Activated CD8-positive, alpha-beta T cell treated with anti-CD3 and anti-CD28 coated beads for 36 hours (primary cell): ENCODE measurements at regions of chr6 and their contacts with region 1.

Region 1: DNA sequence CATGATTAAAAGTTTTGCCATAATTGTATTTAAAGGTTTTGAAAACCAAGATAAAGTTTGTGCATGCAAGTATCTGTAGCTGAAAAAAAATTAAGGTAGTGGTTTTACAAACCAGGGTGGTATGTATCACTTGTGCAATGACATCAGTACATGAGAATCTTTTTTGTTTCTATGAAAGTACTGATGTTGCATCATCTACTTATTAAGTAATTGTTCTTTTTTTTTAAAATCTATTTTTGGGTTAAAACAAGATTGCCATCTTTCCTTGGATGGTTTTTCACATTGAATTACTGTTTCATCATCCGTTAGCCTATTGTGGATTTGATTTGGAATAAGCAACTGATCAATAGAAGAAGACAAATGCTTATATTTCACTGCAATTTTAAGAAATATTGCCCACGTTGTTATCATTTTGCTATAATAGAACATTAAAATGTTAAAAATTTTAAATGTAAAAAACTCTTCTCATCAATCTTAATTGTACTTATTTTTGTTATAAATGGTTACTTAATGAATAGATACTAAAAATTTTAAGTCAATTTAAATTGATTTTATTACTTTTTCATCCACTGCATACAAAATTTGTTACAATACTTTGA is 39.8 kb upstream of the TAGAP start:
- DNase-seq: no peak
- ATAC-seq: no peak
- H3K4me3 Mint-ChIP-seq: no peak overlapping the region
- H3K27ac Mint-ChIP-seq: peak overlapping the region; percentile 78
- H3K4me1 Mint-ChIP-seq: peaks cover 58% of the 10 kb centered on the region
- H3K27me3 Mint-ChIP-seq: no peaks in the 10 kb centered on the region
- CTCF ChIP-seq: no peak

Region 2: GRCh38 chr6:159008656-159009288 is 75.8 kb before region 1 on chr6:
- CTCF ChIA-PET with region 1: interaction called, 10 read pairs
- POLR2A ChIA-PET with region 1: interaction called, 3 read pairs
- intact Hi-C with region 1: no loop called
- DNase-seq: no peak
- ATAC-seq: peak; percentile 76
- H3K4me3 Mint-ChIP-seq: no peak overlapping the region
- H3K27ac Mint-ChIP-seq: peak overlapping the region; percentile 65
- H3K4me1 Mint-ChIP-seq: peaks cover 28% of the 10 kb centered on the region
- H3K27me3 Mint-ChIP-seq: no peaks in the 10 kb centered on the region
- CTCF ChIP-seq: peak; percentile 83

Region 3: GRCh38 chr6:159056003-159056402 is 28.6 kb before region 1 on chr6:
- CTCF ChIA-PET with region 1: interaction called, 5 read pairs
- POLR2A ChIA-PET with region 1: interaction called, 27 read pairs
- intact Hi-C with region 1: no loop called
- DNase-seq: no peak
- ATAC-seq: no peak
- H3K4me3 Mint-ChIP-seq: peak overlapping the region; percentile 59
- H3K27ac Mint-ChIP-seq: peak overlapping the region; percentile 95
- H3K4me1 Mint-ChIP-seq: peaks cover 82% of the 10 kb centered on the region
- H3K27me3 Mint-ChIP-seq: no peaks in the 10 kb centered on the region
- CTCF ChIP-seq: no peak

Region 4: GRCh38 chr6:159062564-159062945 is 22.0 kb before region 1 on chr6:
- CTCF ChIA-PET with region 1: interaction called, 11 read pairs
- POLR2A ChIA-PET with region 1: interaction called, 27 read pairs
- intact Hi-C with region 1: no loop called
- DNase-seq: peak; percentile 84
- ATAC-seq: peak; percentile 79
- H3K4me3 Mint-ChIP-seq: peak overlapping the region; percentile 42
- H3K27ac Mint-ChIP-seq: peak overlapping the region; percentile 95
- H3K4me1 Mint-ChIP-seq: peaks cover 98% of the 10 kb centered on the region
- H3K27me3 Mint-ChIP-seq: no peaks in the 10 kb centered on the region
- CTCF ChIP-seq: no peak

Region 5: GRCh38 chr6:159098636-159099106 is 14.1 kb after region 1 on chr6:
- CTCF ChIA-PET with region 1: interaction called, 29 read pairs
- POLR2A ChIA-PET with region 1: interaction called, 172 read pairs
- intact Hi-C with region 1: loop called (anchors 2 kb)
- DNase-seq: peak; percentile 84
- ATAC-seq: peak; percentile 43
- H3K4me3 Mint-ChIP-seq: peak overlapping the region; percentile 69
- H3K27ac Mint-ChIP-seq: peak overlapping the region; percentile 96
- H3K4me1 Mint-ChIP-seq: peaks cover 93% of the 10 kb centered on the region
- H3K27me3 Mint-ChIP-seq: no peaks in the 10 kb centered on the region
- CTCF ChIP-seq: no peak

Region 6: GRCh38 chr6:159125014-159125609 is 40.5 kb after region 1 on chr6:
- CTCF ChIA-PET with region 1: no interaction called
- POLR2A ChIA-PET with region 1: no interaction called
- intact Hi-C with region 1: no loop called
- DNase-seq: no peak
- ATAC-seq: no peak
- H3K4me3 Mint-ChIP-seq: no peak overlapping the region
- H3K27ac Mint-ChIP-seq: no peak overlapping the region
- H3K4me1 Mint-ChIP-seq: no peaks in the 10 kb centered on the region
- H3K27me3 Mint-ChIP-seq: no peaks in the 10 kb centered on the region
- CTCF ChIP-seq: peak; percentile 30